GM10248 (cell line): ENCODE measurements at regions of chr2 and their contacts with region 1.

Region 1: DNA sequence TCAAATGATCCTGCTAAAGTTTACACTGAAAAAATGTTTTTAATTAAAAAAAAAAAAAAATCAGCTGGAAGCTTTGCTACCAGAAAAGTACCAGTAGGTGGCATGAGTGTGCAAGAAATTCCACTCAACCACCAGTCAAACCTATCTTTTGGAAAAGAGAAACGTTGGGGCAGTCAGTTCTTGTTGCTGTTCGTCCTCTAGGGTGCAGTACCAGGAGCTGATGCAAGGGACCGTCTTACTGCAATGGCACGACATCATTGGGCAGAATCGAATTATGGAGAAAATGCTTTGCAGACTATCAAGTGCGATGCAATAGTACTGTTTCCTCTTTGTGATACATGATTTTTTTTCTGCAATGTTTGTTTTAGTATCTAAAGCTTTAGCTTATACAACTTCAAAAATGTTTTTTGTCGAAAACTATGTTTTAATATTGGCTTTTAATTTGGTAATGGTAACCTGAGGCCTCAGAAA is 18.3 kb downstream of the YPEL5 start:
- DNase-seq: peak; percentile 77
- CTCF ChIP-seq: peak; percentile 73

Region 2: GRCh38 chr2:29950481-29950880 is 214.6 kb before region 1 on chr2:
- CTCF ChIA-PET with region 1: no interaction called
- POLR2A ChIA-PET with region 1: no interaction called
- DNase-seq: no peak
- CTCF ChIP-seq: no peak

Region 3: GRCh38 chr2:30178618-30179434 is 13.7 kb after region 1 on chr2:
- CTCF ChIA-PET with region 1: interaction called, 18 read pairs
- POLR2A ChIA-PET with region 1: interaction called, 3 read pairs
- DNase-seq: no peak
- CTCF ChIP-seq: no peak

Region 4: DNA sequence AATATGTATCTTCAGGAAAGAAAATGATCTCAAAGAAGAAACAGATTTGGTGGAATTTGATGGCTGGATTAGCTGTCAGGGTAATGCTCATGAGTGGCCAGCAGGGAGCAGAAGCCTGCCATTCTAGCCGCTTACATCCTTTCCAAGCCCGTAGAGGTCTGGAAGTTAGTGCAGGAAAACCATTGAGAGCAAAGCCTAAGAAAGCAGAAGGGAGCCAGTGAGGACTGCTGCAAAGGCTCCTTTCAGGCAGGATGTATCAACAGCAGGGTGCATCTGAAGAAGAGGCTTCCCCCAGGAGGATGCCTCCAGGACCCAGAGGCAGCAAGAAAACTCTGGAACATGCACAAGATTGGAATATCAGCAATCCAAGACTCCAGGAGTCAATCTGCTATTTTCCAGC is 43.4 kb after region 1 on chr2:
- CTCF ChIA-PET with region 1: interaction called, 35 read pairs
- POLR2A ChIA-PET with region 1: no interaction called
- DNase-seq: peak; percentile 46
- CTCF ChIP-seq: peak; percentile 82

Region 5: GRCh38 chr2:30225131-30225762 is 60.2 kb after region 1 on chr2:
- CTCF ChIA-PET with region 1: interaction called, 15 read pairs
- POLR2A ChIA-PET with region 1: no interaction called
- DNase-seq: peak; percentile 55
- CTCF ChIP-seq: no peak

Region 6: GRCh38 chr2:30514134-30514847 is 349.2 kb after region 1 on chr2:
- CTCF ChIA-PET with region 1: no interaction called
- POLR2A ChIA-PET with region 1: no interaction called
- DNase-seq: no peak
- CTCF ChIP-seq: no peak

Region 7: GRCh38 chr2:30691948-30692828 is 527.1 kb after region 1 on chr2:
- CTCF ChIA-PET with region 1: interaction called, 46 read pairs
- POLR2A ChIA-PET with region 1: no interaction called
- DNase-seq: no peak
- CTCF ChIP-seq: peak; percentile 53